Activated CD4-positive, alpha-beta T cell treated with anti-CD3 and anti-CD28 coated beads for 36 hours (primary cell): ENCODE measurements at regions of chr5 and their contacts with region 1.

Region 1: GRCh38 chr5:66814146-66814991 is 218.2 kb downstream of the MAST4 start:
- DNase-seq: peak; percentile 70
- ATAC-seq: peak; percentile 83
- H3K4me3 Mint-ChIP-seq: no peak overlapping the region
- H3K27ac Mint-ChIP-seq: no peak overlapping the region
- H3K4me1 Mint-ChIP-seq: peaks cover 3% of the 10 kb centered on the region
- H3K27me3 Mint-ChIP-seq: peaks cover 3% of the 10 kb centered on the region

Region 2: DNA sequence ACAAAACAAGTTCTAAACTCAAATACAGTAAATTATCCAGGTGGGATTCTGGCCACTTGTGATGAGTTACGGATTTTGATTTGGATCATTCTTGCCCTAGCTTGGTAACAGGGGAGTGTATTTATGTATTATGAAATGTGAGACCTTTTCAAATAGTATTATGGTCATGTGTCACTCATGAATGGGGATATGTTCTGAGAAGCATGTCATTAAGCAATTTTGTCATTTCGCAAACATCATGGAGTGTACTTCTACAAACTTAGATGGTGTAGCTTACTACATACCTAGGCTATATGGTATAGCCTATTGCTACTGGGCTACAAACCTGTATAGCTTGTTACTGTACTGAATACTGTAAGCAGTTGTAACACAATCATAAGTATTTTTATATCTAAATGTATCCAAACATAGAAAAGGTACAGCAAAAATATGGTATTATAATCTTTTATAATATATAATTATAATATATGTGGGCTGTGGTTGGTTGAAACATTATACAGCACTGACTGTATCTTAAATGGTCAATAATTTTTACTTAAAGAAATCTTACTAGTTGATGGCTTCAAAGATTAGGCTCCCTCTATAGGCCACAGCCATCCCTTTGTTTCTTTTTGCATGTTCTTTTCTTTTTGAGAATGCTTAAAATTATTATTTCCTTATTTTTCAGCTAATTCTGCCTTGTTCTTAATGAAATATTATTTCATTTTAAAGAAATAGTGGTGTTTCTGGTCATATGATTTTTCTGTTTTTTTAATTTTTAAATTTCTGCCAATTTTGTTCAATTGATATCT is 89.8 kb before region 1 on chr5:
- CTCF ChIA-PET with region 1: no interaction called
- POLR2A ChIA-PET with region 1: no interaction called
- intact Hi-C with region 1: no loop called
- DNase-seq: no peak
- ATAC-seq: no peak
- H3K4me3 Mint-ChIP-seq: no peak overlapping the region
- H3K27ac Mint-ChIP-seq: no peak overlapping the region
- H3K4me1 Mint-ChIP-seq: no peaks in the 10 kb centered on the region
- H3K27me3 Mint-ChIP-seq: peaks cover 10% of the 10 kb centered on the region

Region 3: DNA sequence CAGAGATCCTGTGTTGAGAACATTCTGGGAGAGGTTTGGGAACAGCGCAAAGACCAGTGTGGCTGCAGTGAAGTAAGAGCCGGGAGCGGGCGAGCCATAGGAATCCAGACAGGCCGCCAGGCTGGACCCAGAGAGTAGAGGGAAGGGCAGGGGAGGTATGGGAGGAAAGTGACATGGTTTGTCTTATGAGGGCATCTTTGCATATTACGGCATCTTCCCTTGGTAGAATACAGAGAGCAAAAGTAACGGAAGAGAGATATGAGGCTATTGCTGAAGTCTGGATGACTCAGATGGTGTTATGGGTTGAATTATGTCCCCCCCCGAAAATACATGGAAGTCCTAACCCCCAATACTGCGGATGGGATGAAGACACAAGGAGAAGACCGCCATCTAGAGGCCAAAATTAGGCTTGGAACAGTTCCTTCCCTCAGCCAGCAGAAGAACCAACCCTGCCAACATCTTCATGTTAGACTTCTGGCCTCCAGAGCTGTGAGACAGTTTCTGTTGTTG is 50.0 kb after region 1 on chr5:
- CTCF ChIA-PET with region 1: interaction called, 6 read pairs
- POLR2A ChIA-PET with region 1: no interaction called
- intact Hi-C with region 1: loop called (anchors 1 kb)
- DNase-seq: peak; percentile 37
- ATAC-seq: peak; percentile 65
- H3K4me3 Mint-ChIP-seq: no peak overlapping the region
- H3K27ac Mint-ChIP-seq: no peak overlapping the region
- H3K4me1 Mint-ChIP-seq: peaks cover 3% of the 10 kb centered on the region
- H3K27me3 Mint-ChIP-seq: peaks cover 27% of the 10 kb centered on the region

Region 4: DNA sequence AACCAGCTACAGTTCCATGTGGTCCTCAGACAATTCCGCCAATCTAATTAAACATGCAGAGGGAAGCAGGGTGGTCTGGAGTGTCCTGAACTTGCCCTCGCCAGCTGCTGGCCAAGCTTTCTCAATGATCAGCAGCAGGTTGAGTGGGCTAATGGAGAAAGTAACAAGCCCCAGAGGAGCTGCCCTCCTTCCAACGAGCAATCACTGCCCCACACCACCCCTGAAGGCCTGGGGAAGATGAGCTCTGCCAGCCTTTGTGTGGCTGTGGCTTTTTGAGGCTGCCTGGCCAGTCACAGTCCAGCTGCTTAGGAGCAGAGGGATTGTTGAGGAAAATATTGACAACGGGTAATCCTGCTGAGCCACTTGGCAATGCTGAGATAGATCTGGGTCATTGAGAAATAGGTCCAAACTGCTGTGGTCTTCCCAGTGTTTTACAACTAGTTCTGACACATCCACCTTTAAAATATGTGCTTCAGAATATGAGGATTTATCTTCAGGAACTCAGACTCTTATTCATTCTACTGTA is 274.9 kb after region 1 on chr5:
- CTCF ChIA-PET with region 1: no interaction called
- POLR2A ChIA-PET with region 1: no interaction called
- intact Hi-C with region 1: no loop called
- DNase-seq: no peak
- ATAC-seq: no peak
- H3K4me3 Mint-ChIP-seq: no peak overlapping the region
- H3K27ac Mint-ChIP-seq: no peak overlapping the region
- H3K4me1 Mint-ChIP-seq: peaks cover 16% of the 10 kb centered on the region
- H3K27me3 Mint-ChIP-seq: no peaks in the 10 kb centered on the region

Region 5: DNA sequence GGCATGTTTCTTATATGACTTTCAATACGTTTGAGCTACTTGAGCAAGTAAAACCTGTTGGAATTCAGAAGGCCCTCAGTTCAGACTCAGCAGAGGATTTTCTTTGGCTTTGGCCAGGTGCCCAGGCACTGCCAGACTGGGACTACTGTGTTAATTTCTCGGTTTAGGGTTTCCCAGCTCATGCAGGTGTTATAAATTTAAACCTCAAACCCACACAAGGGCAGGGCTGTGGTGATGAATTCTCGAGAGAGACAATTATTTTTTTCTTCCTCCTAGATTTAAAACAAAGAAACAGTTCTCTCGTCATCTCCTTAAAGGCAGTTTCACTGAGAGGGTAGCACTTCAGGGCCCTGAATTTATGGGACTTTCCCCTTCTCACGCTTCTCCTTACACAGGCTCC is 995.2 kb after region 1 on chr5:
- CTCF ChIA-PET with region 1: no interaction called
- POLR2A ChIA-PET with region 1: no interaction called
- intact Hi-C with region 1: no loop called
- DNase-seq: no peak
- ATAC-seq: no peak
- H3K4me3 Mint-ChIP-seq: no peak overlapping the region
- H3K27ac Mint-ChIP-seq: no peak overlapping the region
- H3K4me1 Mint-ChIP-seq: no peaks in the 10 kb centered on the region
- H3K27me3 Mint-ChIP-seq: no peaks in the 10 kb centered on the region